Cardiac septum (tissue), 1 donor: ENCODE measurements at regions of chr9 and their contacts with region 1.

Region 1: DNA sequence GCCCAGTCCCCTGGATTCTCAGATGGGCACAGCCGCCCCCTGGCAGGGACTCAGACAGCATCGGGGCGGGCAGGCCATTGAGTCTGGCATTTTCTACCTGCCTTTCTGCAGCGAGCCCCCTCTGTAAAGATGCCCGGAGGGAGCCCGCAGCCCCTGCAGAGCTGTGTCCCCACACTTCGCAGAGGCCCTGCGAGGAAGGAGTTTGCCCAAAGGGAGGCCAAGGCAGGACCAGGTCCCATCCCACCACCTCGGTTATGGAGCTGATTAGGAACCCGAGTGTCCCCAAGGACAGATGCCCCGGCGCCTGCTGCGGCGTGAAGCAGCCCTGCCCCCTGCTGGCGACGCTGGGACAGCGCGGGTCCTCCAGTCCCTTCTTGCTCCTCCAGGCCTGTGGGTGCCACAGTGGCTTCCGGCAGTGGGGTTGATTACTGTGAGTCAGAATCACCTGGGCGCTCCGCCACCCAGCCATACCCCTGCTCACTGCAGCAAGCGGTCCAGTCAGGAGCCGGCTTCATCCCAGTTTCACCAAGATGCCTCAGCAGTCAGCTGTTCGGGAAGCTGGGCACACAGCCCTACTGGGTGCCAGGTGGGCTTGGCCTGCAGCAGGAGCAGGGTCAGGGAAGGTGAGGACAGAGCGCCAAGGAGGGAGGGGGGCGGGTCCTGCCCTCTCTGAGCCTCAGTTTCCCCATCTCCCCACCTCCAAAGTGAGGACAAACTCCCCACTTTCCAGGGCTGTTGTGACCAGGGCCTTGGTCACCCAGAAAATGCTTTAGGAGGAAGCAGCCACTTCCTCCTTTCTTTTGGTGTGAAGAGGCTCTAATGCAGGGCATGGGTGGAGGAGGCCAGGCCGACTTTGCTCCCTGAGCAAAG is 117.1 kb downstream of the RXRA start:
- DNase-seq: peak; percentile 93

Region 2: DNA sequence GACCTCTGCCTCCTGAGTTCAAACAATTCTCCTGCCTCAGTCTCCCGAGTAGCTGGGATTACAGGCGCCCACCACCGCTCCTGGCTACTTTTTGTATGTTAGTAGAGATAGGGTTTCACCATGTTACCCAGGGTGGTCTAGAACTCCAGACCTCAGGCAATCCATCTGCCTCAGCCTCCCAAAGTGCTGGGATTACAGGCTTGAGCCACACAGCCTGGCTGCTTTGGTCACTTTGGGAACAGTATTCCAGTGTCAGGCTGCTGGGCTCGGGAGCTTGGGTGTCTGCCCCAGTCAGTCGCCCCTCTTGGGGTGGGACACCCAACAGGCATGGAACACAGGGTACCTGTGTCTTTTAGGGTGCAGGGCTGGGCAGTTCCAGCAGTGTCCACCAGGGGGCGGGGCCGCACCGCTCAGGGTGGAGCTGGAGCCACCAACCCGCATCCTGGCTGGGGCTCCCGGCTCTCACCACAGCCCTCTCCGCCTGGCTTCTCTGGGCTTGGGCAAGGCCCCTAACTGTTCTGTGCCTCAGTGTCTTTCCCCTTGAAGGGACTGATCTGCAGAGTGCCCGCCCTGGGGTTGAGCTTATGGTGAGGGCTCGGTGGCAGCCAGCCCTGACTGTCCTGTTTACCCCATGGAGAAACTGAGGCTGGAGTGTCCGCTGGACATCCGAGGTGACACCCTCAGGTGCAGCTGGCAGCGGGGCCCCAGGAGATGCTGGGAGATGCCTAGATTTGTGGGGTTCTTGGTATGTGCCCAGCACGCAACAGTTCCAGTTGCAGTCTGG is 272.7 kb before region 1 on chr9:
- intact Hi-C with region 1: loop called (anchors 1 kb)
- DNase-seq: no peak

Region 3: GRCh38 chr9:134344068-134344799 is 99.2 kb before region 1 on chr9:
- intact Hi-C with region 1: loop called (anchors 5 kb)
- DNase-seq: peak; percentile 84